HCT116 (cell line): ENCODE measurements at regions of chr17 and their contacts with region 1.

Region 1: GRCh38 chr17:43483674-43484372 is at the start of gene DHX8:
- DNase-seq: peak; percentile 98
- ATAC-seq: peak; percentile 95
- H3K4me3 ChIP-seq: peak within 1 kb of the TSS; percentile 75 to 83
- H3K27ac ChIP-seq: peak within 1 kb of the TSS; percentile 51
- H3K4me1 ChIP-seq: peaks cover 11 to 13% of the 10 kb centered on the region in 2 experiments
- H3K27me3 ChIP-seq: no peaks in the 10 kb centered on the region
- CTCF ChIP-seq: peak; percentile 100
- POLR2A ChIP-seq: peak; percentile 65
- RAD21 ChIP-seq: peak; percentile 100
- total RNA-seq, gene DHX8: 53.5 TPM

Region 2: DNA sequence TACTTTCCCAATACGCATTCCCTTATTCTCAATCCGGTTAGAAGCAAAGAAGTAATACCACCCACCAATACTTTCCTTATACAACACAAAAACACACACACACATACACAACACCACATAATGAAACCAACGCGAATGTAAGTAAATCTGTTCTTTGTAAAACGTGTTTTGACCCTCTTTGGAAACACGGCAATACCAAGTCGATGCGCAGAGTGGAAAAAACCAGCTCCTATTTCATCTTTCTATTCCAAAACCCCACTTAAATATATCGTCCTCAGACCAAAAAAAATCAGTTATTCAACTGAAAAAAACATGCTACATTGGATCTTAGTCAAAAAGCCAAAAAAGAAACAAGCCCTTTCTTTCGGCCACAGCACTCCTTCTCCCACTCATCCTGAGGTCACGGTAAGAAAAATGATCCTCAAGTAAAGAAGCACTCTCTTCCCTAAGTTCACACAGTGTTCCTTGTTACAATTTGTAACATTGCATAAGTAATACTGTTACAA is 116.0 kb before region 1 on chr17:
- CTCF ChIA-PET with region 1: interaction called, 21 read pairs
- POLR2A ChIA-PET with region 1: interaction called, 68 read pairs
- RAD21 ChIA-PET with region 1: no interaction called
- intact Hi-C with region 1: no loop called
- DNase-seq: peak; percentile 96
- ATAC-seq: peak; percentile 58
- H3K4me3 ChIP-seq: peak overlapping the region; percentile 1 to 58; a peak in 3 of 4 replicates
- H3K27ac ChIP-seq: peak overlapping the region; percentile 95
- H3K4me1 ChIP-seq: peaks cover 20 to 37% of the 10 kb centered on the region in 2 experiments
- H3K27me3 ChIP-seq: no peaks in the 10 kb centered on the region
- CTCF ChIP-seq: no peak
- POLR2A ChIP-seq: peak; percentile 100
- RAD21 ChIP-seq: no peak; the same call in 1 of the 2 replicates

Region 3: DNA sequence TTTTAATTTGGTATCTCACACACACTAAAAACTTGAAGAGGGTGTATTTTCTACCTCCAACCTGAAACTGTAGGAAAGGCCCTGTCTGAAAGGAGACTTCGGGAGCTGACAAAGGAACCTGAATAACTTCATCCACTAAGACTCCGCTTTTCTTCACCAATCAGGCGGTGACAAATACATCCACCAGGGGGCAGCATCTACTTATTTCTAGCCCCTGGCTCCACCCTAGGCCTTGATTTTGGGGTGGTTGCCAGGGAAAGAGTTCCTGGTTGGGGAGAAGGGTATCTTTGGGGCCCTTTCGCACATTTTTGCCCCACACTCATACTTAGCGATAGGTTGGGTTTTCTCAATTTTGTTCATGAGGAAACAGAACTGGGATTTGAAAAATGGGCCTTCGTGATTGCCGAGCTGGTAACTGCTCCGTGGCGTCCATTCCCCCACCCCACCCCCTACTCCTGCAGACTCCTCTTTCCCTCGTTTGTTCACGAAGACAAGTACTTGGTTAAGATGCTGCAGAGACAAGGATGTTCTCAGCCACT is 89.8 kb before region 1 on chr17:
- CTCF ChIA-PET with region 1: interaction called, 194 read pairs
- POLR2A ChIA-PET with region 1: interaction called, 63 read pairs
- RAD21 ChIA-PET with region 1: interaction called, 15 to 31 read pairs
- intact Hi-C with region 1: loop called (anchors 1 kb)
- DNase-seq: peak; percentile 79
- ATAC-seq: peak; percentile 59
- H3K4me3 ChIP-seq: no peak overlapping the region
- H3K27ac ChIP-seq: no peak overlapping the region
- H3K4me1 ChIP-seq: peaks cover 3 to 24% of the 10 kb centered on the region in 2 experiments; a peak in 3 of 4 replicates
- H3K27me3 ChIP-seq: no peaks in the 10 kb centered on the region
- CTCF ChIP-seq: peak; percentile 82 to 99 (median 96)
- POLR2A ChIP-seq: no peak
- RAD21 ChIP-seq: peak; percentile 100

Region 4: GRCh38 chr17:43428524-43428923 is 55.3 kb before region 1 on chr17:
- CTCF ChIA-PET with region 1: no interaction called
- POLR2A ChIA-PET with region 1: no interaction called
- RAD21 ChIA-PET with region 1: no interaction called
- intact Hi-C with region 1: loop called (anchors 2 kb)
- DNase-seq: no peak
- ATAC-seq: no peak
- H3K4me3 ChIP-seq: no peak overlapping the region
- H3K27ac ChIP-seq: no peak overlapping the region
- H3K4me1 ChIP-seq: peaks cover 2 to 28% of the 10 kb centered on the region in 2 experiments; a peak in 3 of 4 replicates
- H3K27me3 ChIP-seq: no peaks in the 10 kb centered on the region
- CTCF ChIP-seq: peak; percentile 23 to 43 (median 31); a peak in 4 of 6 replicates
- POLR2A ChIP-seq: no peak
- RAD21 ChIP-seq: peak; percentile 31; the same call in 1 of the 2 replicates